Sciatic nerve (tissue), 2 donors: ENCODE measurements at regions of chr2 and their contacts with region 1.

Region 1: DNA sequence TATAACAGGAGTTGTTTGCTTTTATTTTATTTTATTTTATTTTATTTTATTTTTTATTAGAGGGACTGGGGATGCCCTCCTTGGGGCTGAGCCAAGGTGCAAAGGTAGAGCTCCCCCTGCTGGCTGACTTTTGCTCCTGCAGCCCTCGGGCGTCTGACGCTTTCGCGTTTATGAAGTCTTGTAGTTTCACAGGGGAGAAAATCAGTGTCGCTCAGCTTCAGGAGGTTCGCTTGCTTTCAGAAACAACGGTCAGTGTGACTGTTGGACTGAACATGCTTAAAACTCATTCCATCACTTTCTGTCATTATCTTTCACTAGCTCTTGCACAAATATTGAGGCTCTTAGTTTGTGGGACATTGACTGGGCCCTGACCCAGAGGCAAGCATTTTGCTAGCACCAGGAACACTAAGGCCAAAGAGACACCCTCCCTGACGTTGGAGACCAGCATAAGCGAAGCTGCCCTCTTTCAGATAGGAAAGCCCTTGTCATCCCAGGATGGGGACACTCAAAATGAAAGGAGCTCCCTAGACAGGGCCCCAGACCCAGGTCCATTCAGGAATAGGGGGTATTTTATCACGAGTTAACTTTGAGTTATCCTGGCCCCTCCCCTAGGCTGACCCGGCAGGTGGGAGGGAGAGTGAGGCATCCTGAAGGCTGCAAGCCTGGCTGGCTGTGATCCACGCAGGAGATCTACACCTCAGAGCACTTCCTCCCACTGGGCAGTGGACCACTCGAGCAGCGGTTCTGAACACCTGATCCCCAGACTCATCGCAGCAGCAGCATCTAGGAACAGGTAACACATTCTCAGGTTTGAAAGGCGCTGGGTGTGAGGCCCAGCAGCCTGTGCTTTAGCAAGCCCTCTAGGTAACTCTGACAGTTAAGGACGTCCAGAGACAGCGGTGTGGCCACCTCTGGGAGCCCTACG is 34.4 kb downstream of the LGALSL start:
- DNase-seq: peak; percentile 90
- ATAC-seq: peak; percentile 76

Region 2: GRCh38 chr2:63676135-63676534 is 812.2 kb before region 1 on chr2:
- intact Hi-C with region 1: loop called (anchors 10 kb)
- DNase-seq: no peak
- ATAC-seq: no peak

Region 3: DNA sequence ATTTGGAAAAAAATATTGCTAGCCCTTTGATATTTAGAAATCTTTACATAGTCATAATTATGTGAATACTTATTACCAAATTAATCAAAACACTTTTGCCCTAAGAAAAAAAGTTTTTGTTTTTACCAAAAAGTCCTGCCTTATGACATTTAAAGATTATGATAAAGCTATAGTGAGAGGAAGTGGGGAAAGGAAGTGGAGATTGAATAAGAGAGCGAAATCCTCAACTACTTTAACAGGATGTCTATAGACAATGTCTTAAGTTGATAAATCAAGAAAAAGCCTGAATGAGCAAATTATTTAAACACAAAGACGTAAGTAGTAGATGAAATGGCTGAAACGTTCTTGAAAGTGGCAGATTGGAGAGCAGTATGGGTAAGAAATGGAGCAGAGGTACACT is 448.2 kb before region 1 on chr2:
- intact Hi-C with region 1: loop called (anchors 10 kb)
- DNase-seq: no peak
- ATAC-seq: no peak

Region 4: DNA sequence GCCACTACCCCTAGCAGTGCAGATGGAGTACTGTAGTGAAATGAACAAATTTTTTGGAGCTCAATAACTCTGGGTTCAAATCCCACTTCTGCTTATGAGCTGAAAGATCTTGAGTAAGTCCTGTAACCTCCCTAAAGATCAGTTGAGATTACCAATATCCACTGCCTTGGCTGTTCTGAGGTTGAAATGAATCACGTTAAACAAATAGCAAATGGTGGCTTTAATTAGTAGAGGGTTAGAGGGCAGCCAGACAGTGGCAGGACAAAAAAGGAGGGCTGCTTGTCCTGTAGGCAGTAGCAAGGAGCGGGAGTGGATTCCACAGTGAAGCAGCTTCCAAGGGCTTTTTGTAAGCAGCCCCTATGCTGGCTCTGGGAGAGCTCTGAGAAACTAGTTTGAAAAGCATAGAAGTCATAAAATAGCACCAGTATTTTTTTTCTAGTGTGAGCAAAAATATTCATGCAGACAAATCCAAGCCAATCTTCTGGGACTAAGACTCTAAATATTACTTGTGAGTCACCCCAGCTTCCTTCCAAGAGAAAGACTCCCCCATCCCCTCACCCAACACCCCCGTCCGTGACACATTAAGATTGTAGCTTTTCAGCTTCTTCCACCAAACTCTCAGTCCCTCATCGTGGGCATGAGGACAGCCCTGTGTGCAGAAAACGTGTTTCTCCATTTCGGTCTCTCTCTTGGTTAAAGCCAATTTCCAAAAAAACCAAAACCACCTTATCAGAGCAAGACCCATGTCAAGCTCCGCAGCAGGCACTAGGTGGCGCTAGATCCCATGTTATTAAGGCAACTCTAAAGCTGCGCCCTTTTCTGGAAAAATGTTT is 157.8 kb before region 1 on chr2:
- intact Hi-C with region 1: loop called (anchors 5 kb)
- DNase-seq: peak; percentile 91
- ATAC-seq: peak; percentile 85